PC-9 (cell line): ENCODE measurements at regions of chr12 and their contacts with region 1.

Region 1: GRCh38 chr12:116813278-116814041 is 67.8 kb downstream of the HRK start:
- DNase-seq: peak; percentile 89 to 99
- H3K4me3 ChIP-seq: no peak overlapping the region
- H3K27ac ChIP-seq: peak overlapping the region; percentile 63
- H3K4me1 ChIP-seq: peaks cover 32% of the 10 kb centered on the region
- H3K27me3 ChIP-seq: no peaks in the 10 kb centered on the region
- CTCF ChIP-seq: no peak; the same call in 1 of the 2 replicates

Region 2: DNA sequence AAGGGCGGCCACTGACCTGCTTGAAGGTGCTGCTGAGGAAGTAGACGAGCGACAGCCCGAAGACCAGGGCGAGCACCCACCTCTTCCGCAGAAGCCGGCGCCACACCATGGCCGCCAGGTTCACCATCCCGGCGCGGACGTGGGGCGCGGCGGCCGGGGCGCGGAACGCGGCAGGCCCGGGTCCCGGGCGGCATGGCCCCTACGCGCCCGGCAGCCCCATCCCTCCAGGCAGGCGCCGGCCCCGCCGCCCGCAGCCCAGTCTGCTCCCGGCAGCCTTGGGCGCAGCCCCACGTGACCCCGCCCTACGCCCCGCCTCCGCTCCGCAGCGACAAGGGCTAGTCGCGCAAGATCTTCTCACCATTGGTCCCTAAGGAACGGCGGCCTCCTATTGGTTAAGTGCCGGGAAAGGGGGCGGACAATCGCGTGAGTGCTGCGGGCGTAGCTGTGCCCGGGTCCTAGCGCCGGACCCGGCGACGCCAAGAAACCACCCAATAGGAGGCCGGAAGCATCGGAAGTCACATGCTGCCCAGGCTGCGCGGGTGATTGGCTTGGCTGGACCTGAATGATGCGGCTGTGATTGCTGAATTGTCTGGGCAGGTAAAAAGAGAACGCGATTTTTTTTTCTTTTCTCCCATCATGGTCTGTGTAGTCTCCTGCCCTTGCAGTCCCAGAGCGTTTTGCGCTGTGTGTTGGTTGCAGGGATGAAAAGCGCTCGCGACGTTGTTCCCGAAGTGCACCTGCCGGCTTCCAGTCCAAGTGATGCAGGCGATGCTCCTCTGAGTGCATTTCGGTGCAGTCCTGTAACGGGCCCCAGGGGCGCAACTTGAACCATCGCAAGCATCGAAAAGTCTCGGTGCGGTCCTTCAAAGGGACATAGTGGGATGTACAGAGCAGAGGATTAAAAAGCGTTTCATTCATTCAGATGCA is 75.4 kb before region 1 on chr12 and contains the starts of genes RNFT2 and SPRING1:
- CTCF ChIA-PET with region 1: no interaction called
- POLR2A ChIA-PET with region 1: no interaction called
- intact Hi-C with region 1: loop called (anchors 1 kb)
- DNase-seq: peak; percentile 96 to 99
- H3K4me3 ChIP-seq: peak within 1 kb of the TSS; percentile 89
- H3K27ac ChIP-seq: no peak within 1 kb of the TSS
- H3K4me1 ChIP-seq: peaks cover 14% of the 10 kb centered on the region
- H3K27me3 ChIP-seq: no peaks in the 10 kb centered on the region
- CTCF ChIP-seq: peak; percentile 19; the same call in 1 of the 2 replicates
- total RNA-seq, gene RNFT2: 18.6 and 21.1 TPM in 2 replicates
- total RNA-seq, gene SPRING1: 29.3 and 32.5 TPM in 2 replicates

Region 3: DNA sequence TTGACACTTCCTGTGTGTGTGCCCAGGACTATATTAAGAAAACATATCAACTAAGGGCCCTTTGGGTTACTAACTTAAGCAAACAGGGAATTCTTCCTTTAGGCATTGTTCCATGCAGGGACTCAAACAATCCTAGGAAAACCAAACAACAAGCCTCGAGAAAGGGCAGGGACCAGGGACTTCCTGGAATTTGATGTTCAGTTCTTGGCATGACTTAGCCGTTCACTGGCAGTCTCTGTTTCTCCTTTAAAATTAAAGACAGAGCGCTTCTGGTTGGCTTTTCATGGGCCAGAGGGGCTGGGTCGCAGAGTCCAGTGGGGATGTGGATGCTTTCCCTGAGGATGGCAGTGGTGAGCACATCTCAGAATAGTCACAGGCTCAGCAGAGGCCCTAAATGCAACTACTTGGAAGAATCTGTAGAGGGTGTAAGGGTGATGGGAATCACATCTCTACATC is 40.2 kb before region 1 on chr12:
- CTCF ChIA-PET with region 1: no interaction called
- POLR2A ChIA-PET with region 1: no interaction called
- intact Hi-C with region 1: no loop called
- DNase-seq: no peak
- H3K4me3 ChIP-seq: no peak overlapping the region
- H3K27ac ChIP-seq: no peak overlapping the region
- H3K4me1 ChIP-seq: no peaks in the 10 kb centered on the region
- H3K27me3 ChIP-seq: no peaks in the 10 kb centered on the region
- CTCF ChIP-seq: peak; percentile 49; the same call in 1 of the 2 replicates